GM18951 (cell line): ENCODE measurements at regions of chr2 and their contacts with region 1.

Region 1: GRCh38 chr2:121530212-121530705 is 421 bp upstream of the RNU4ATAC start:
- POLR2A ChIP-seq: no peak

Region 2: DNA sequence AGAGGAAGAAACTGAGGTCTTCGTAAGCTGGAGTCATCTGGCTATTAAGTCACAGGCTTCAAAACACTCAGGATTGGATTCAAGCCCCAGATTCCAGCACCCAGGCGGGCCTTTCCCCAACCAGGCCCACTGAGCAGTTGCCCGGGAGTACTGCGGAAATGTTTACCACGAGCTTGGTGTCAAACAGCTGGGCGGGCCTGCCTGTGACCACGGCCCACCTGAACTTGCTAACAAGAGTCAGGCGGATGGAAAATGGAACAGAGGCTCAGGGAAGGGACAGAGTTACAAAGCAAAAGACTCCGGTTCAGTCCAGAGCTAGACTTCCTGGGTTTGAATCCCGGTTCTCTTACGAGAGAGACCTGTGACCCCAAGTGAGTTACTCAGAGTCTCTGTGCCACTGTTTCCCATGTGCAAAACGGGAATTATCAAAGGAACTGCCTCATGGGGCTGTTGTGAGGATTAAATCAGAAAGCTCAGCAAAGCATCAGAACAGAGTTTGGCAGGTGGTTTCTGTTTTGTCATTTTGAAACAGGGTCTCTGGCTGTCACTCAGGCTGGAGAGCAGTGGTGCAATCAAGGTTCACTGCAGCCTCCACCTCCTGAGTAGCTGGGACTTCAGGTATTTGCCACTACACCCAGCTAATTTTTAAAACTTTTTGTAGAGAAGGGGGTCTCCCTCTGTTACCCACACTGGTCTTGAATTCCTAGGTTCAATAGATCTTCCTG is 196.3 kb before region 1 on chr2:
- in situ Hi-C with region 1: no loop called
- POLR2A ChIP-seq: no peak

Region 3: DNA sequence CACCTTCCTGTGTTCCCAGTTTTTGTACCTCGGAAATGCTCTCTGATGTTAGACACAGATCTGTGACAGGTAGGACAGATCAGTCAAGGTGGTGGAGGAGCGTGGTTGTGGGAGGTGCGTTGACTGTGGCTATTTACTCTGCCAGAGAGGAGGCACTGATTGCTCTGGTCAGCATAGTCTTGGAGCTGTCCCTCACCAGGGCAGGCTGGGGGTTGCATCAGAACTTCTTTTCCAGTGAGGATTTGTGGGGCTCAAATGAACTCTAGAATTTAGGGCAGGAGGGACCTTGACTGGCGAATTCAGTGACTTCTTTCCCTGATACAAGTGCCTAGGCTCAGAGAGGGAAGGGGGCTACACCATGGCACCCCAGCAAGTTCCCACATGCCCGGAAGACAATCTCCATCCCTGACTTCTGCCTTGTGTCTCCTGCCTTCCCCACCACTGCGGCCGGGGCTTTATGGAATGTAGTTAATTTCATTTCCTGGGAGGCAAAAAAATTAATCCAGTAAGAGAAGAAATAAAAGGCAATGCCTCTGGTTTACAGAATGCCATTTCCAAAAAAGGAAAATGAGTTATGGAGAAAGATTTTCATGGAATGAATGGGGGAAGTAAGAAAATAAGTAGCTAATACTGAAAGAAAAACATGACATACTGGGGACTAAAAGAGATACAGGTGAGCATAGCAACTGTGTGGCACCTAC is 180.4 kb after region 1 on chr2:
- in situ Hi-C with region 1: loop called (anchors 10 kb)
- POLR2A ChIP-seq: no peak